Activated B cell treated with CpG ODN at 0.5 μM for 24 hours (primary cell): ENCODE measurements at regions of chrX and their contacts with region 1.

Region 1: DNA sequence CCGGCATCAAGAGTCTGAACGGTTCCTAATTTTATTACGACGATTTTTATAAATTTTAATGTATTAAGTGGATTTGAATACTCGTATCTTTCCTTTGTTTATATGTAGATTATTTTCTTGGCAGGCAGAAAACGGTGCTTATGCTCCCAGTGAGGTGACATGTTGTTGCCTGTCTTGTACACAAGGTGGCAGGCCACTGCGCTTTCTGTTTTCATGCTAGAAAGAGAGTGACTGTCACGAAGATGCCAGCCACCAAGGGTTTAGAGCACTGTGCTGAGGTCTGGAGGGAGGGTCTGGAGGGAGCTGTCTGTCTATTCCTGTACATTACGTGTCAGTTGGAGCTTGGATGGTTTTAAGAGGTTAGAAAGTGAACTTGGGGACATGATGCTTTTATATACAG is 87.7 kb downstream of the SHROOM2 start:
- DNase-seq: peak; percentile 16
- ATAC-seq: peak; percentile 72
- H3K4me3 Mint-ChIP-seq: no peak overlapping the region
- H3K27ac Mint-ChIP-seq: no peak overlapping the region
- H3K4me1 Mint-ChIP-seq: peaks cover 2% of the 10 kb centered on the region
- H3K27me3 Mint-ChIP-seq: peaks cover 9% of the 10 kb centered on the region
- CTCF ChIP-seq: no peak

Region 2: DNA sequence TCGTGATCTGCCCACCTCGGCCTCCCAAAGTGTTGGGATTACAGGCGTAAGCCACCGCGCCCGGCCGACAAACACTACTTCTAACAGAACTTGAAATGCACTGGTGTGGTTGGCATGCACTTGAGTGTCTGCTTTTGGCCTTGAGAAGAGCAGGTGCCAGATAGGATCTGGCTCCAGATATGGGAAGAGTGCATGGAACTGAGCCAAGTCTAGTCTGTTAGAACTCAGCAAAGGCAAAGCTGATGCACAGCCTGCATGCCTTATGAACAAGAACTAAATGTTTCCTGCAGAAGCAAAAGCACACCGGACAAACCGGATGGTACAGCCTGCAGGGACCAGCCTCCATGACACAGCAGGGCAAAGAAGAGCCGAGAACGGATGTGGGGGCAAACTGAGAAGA is 444.2 kb before region 1 on chrX:
- CTCF ChIA-PET with region 1: no interaction called
- POLR2A ChIA-PET with region 1: no interaction called
- intact Hi-C with region 1: no loop called
- DNase-seq: no peak
- ATAC-seq: no peak
- H3K4me3 Mint-ChIP-seq: no peak overlapping the region
- H3K27ac Mint-ChIP-seq: no peak overlapping the region
- H3K4me1 Mint-ChIP-seq: no peaks in the 10 kb centered on the region
- H3K27me3 Mint-ChIP-seq: no peaks in the 10 kb centered on the region
- CTCF ChIP-seq: no peak

Region 3: GRCh38 chrX:10071451-10072144 is 197.6 kb after region 1 on chrX:
- CTCF ChIA-PET with region 1: no interaction called
- POLR2A ChIA-PET with region 1: no interaction called
- intact Hi-C with region 1: loop called (anchors 5 kb)
- DNase-seq: no peak
- ATAC-seq: no peak
- H3K4me3 Mint-ChIP-seq: no peak overlapping the region
- H3K27ac Mint-ChIP-seq: no peak overlapping the region
- H3K4me1 Mint-ChIP-seq: peaks cover 10% of the 10 kb centered on the region
- H3K27me3 Mint-ChIP-seq: no peaks in the 10 kb centered on the region
- CTCF ChIP-seq: no peak